Ascending aorta (tissue), 2 donors: ENCODE measurements at regions of chr6 and their contacts with region 1.

Region 1: GRCh38 chr6:107674995-107675738 is 148.9 kb downstream of the SCML4 start:
- DNase-seq: peak in 1 of 2 donors; percentile 77
- H3K4me3 ChIP-seq: no peak overlapping the region
- H3K27ac ChIP-seq: no peak overlapping the region
- H3K4me1 ChIP-seq: no peaks in the 10 kb centered on the region
- H3K27me3 ChIP-seq: no peaks in the 10 kb centered on the region
- CTCF ChIP-seq: peak; percentile 76 to 91 (median 82)

Region 2: GRCh38 chr6:107641500-107641941 is 33.6 kb before region 1 on chr6:
- intact Hi-C with region 1: no loop called
- DNase-seq: no peak
- H3K4me3 ChIP-seq: no peak overlapping the region
- H3K27ac ChIP-seq: no peak overlapping the region
- H3K4me1 ChIP-seq: peaks cover 0 to 2% of the 10 kb centered on the region in 2 donors
- H3K27me3 ChIP-seq: no peaks in the 10 kb centered on the region
- CTCF ChIP-seq: no peak

Region 3: GRCh38 chr6:107704347-107705013 is 29.3 kb after region 1 on chr6:
- intact Hi-C with region 1: loop called (anchors 2 kb)
- DNase-seq: no peak
- H3K4me3 ChIP-seq: no peak overlapping the region
- H3K27ac ChIP-seq: no peak overlapping the region
- H3K4me1 ChIP-seq: no peaks in the 10 kb centered on the region
- H3K27me3 ChIP-seq: no peaks in the 10 kb centered on the region
- CTCF ChIP-seq: peak; percentile 50 to 85 (median 83)

Region 4: DNA sequence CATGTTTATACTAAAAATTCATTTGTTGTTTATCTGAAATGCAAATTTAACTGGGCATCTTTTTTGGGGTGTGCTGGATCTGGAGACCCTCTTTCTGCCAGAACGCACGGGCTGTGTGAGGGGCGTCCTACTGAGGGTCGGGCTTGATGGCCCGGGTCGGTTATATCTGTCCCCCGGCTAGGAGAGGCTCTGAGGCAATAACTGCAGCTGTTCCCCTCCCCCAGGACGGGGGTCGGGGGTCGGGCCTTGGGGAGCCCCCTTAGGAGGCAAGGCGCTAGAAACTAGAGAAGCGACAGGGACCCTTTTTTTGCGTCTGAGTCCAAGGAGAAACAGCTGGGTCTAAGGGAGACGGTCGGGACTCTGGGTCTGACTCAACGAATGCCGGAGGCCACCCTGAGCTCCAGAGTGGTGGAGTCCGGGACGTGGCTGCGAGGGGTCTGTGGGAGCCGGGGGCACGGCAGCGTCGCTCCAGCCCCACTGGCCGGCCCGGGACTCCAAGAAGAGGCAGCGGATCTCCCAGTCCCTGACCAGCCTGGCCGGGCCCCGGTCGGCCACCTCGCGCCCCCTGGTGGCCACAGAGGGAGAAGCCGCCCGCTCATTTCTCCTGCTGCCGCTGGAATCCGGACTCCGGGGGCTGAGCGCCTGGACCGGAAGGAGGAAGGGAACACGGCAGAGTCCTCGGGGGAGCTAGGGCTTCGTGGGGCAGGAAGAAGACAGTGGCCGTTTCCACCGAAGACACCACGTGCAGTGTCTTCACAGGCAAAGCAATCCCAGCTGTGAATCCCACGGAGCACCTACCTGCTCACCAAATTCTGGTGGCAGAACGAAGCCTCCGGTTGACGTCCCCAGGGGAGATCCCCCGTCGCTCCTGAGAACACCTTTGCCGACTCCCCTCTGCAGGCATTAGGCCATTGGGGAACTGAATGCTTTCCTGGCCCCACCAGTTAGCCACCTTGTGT is 173.0 kb after region 1 on chr6:
- intact Hi-C with region 1: loop called (anchors 1 kb)
- DNase-seq: peak in 1 of 2 donors; percentile 90
- H3K4me3 ChIP-seq: peak overlapping the region; percentile 48 to 67
- H3K27ac ChIP-seq: no peak overlapping the region
- H3K4me1 ChIP-seq: peaks cover 2 to 4% of the 10 kb centered on the region in 2 donors
- H3K27me3 ChIP-seq: no peaks in the 10 kb centered on the region
- CTCF ChIP-seq: peak; percentile 86 to 98 (median 95)